CD4-positive, alpha-beta memory T cell (primary cell): ENCODE measurements at regions of chr9 and their contacts with region 1.

Region 1: GRCh38 chr9:37753489-37754190 is at the start of gene TRMT10B:
- DNase-seq: peak; percentile 60 to 77 (median 68)
- H3K4me3 ChIP-seq: peak within 1 kb of the TSS; percentile 94 to 99
- H3K4me3 Mint-ChIP-seq: peak within 1 kb of the TSS; percentile 95 to 99 (median 98)
- H3K27ac ChIP-seq: peak within 1 kb of the TSS; percentile 80
- H3K27ac Mint-ChIP-seq: peak within 1 kb of the TSS; percentile 78 to 97 (median 95)
- H3K4me1 ChIP-seq: peaks cover 15% of the 10 kb centered on the region
- H3K4me1 Mint-ChIP-seq: peaks cover 15 to 46% (median 30%) of the 10 kb centered on the region in 4 donors
- H3K27me3 ChIP-seq: no peaks in the 10 kb centered on the region
- H3K27me3 Mint-ChIP-seq: no peaks in the 10 kb centered on the region
- total RNA-seq, gene TRMT10B: 24.3 to 27.4 TPM

Region 2: DNA sequence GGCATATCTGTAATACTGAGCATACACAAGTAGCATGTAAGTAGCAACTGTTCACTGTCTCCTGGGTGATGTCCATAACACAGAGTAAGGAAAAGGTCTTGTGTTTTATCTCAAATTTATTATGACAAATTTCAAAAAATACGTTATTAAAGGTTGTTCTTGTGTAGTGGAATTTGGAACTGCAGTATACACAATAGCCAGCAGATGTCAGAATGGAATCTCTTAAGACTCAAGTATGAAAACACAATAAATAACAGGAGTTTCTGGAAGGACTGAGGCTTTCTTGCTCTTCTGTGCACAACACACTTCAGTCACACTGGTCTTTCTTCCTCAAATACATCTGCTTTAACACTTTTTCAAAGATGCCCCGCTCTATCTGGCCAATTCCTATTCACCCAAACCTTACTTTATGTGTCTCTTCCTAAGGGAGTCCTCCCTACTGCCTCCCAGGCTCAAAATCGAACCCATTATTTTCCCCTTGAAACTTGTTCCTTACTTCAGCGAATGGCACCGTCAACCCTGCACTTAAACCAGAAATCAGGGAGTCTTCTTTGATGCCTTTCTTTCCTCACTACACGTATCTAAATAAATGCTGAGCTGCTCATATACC is 171.0 kb before region 1 on chr9:
- CTCF ChIA-PET with region 1: no interaction called
- POLR2A ChIA-PET with region 1: no interaction called
- intact Hi-C with region 1: loop called (anchors 5 kb)
- DNase-seq: peak in 4 of 5 donors; percentile 22 to 42 (median 32)
- H3K4me3 ChIP-seq: no peak overlapping the region
- H3K4me3 Mint-ChIP-seq: no peak overlapping the region
- H3K27ac ChIP-seq: no peak overlapping the region
- H3K27ac Mint-ChIP-seq: peak overlapping the region in 4 of 7 donors; percentile 1 to 70 (median 28)
- H3K4me1 ChIP-seq: no peaks in the 10 kb centered on the region
- H3K4me1 Mint-ChIP-seq: peaks cover 3 to 10% (median 6%) of the 10 kb centered on the region in 4 donors
- H3K27me3 ChIP-seq: no peaks in the 10 kb centered on the region
- H3K27me3 Mint-ChIP-seq: no peaks in the 10 kb centered on the region

Region 3: DNA sequence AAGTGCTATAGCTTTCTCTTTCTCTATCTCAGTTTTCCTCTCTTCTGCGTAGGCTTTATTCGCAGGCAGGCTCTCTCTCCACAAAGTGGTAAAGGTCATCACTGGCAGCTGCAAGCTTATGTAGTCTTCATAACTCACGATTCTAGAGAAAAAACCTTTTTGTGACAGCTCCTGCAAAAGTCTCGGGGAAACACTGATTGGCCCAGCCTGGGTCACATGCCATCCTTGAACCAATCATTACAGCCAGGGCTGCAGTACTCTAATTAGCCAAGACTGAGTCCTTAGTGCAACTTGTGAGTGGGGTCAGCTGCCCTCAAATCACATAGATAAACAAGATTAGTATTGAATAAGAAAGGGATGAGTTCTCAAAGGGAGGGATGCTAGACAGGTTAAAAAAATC is 121.2 kb before region 1 on chr9:
- CTCF ChIA-PET with region 1: no interaction called
- POLR2A ChIA-PET with region 1: no interaction called
- intact Hi-C with region 1: no loop called
- DNase-seq: no peak
- H3K4me3 ChIP-seq: no peak overlapping the region
- H3K4me3 Mint-ChIP-seq: no peak overlapping the region
- H3K27ac ChIP-seq: no peak overlapping the region
- H3K27ac Mint-ChIP-seq: no peak overlapping the region
- H3K4me1 ChIP-seq: no peaks in the 10 kb centered on the region
- H3K4me1 Mint-ChIP-seq: no peaks in the 10 kb centered on the region
- H3K27me3 ChIP-seq: no peaks in the 10 kb centered on the region
- H3K27me3 Mint-ChIP-seq: peaks cover 5 to 6% of the 10 kb centered on the region in 2 donors

Region 4: DNA sequence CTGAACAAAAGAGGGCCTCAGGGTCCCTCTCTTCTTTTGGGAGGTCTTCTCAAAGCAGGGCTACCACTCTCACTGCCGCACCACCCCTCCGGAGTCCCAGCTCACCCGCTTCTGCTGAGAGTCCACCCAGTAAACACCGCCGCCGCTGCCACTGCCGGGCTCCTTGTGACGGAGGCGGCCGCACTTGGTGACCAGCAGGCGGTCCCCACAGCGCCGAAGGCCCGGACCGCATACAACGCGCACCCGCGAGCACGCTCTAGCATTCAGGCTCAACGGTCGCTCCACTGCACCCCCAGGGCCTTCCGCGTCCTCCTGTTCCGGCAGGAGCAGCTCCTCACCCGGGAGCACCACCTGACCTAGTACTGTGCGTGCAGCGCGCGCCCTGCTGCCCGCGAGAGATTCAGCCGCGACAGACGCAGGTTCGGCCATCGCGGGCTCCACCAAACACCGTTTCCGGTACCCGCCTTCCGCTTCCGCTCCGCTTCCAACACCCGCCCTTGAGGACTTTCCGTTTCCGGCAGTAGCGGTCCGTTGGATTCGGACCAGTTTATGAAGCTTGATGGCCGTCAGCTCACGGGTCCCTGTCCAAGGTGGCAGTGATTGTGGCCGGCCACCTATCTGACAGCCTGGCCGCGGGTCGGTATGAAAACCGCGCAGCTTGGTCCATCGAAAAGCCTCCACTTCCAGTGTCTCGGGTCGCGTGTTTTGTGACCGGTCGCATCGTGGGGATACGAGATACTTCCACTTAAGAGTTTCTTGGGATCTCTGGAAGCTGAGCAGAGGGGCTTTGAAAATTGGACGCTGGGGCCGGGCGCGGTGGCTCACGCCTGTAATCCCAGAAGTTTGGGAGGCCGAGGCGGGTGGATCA is 31.2 kb after region 1 on chr9 and contains the start of gene EXOSC3:
- CTCF ChIA-PET with region 1: interaction called, 3 read pairs
- POLR2A ChIA-PET with region 1: interaction called, 6 read pairs
- intact Hi-C with region 1: loop called (anchors 1 kb)
- DNase-seq: peak; percentile 82 to 88 (median 83)
- H3K4me3 ChIP-seq: peak within 1 kb of the TSS; percentile 93 to 98
- H3K4me3 Mint-ChIP-seq: peak within 1 kb of the TSS; percentile 96 to 99 (median 96)
- H3K27ac ChIP-seq: peak within 1 kb of the TSS; percentile 83
- H3K27ac Mint-ChIP-seq: peak within 1 kb of the TSS; percentile 95 to 98 (median 97)
- H3K4me1 ChIP-seq: peaks cover 31% of the 10 kb centered on the region
- H3K4me1 Mint-ChIP-seq: peaks cover 23 to 45% (median 30%) of the 10 kb centered on the region in 4 donors
- H3K27me3 ChIP-seq: no peaks in the 10 kb centered on the region
- H3K27me3 Mint-ChIP-seq: no peaks in the 10 kb centered on the region
- total RNA-seq, gene EXOSC3: 63.5 to 68.6 TPM

Region 5: DNA sequence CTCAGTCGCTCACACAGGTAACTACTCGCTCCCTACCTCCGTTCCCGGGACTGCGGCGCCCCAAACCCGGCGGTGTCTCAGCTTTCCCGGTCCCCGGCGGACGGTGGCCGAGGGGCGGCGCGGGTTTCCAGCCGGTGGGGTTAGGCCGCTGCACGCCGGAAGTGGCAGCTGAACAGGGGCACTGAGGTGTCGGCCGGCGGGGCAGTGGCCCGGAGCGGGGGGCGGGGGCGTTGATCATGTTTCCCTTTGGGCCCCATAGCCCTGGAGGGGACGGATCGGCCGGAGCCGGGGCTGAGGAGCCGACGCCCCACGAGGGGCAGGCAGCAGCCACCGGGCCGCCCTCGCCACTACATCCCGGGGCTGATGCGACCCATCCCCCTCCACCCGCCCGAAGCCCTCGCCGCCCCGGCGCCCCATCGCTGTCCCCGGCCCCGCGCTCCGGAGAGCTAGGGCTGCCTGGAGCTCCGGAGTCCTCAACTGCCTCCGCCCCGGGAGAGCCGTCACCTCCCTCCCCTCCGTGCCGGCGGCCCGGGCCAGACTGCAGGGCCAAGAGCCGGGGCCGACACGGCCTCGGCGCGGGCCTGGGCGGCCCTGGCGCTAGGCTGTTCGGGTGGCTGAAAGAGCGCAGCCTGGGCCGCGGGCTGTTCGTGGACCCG is 47.1 kb after region 1 on chr9 and contains the start of gene DCAF10:
- CTCF ChIA-PET with region 1: interaction called, 3 read pairs
- POLR2A ChIA-PET with region 1: interaction called, 5 read pairs
- intact Hi-C with region 1: loop called (anchors 1 kb)
- DNase-seq: peak; percentile 83 to 91 (median 86)
- H3K4me3 ChIP-seq: peak within 1 kb of the TSS; percentile 76 to 98
- H3K4me3 Mint-ChIP-seq: peak within 1 kb of the TSS; percentile 91 to 96 (median 94)
- H3K27ac ChIP-seq: peak within 1 kb of the TSS; percentile 70
- H3K27ac Mint-ChIP-seq: peak within 1 kb of the TSS; percentile 87 to 97 (median 92)
- H3K4me1 ChIP-seq: peaks cover 35% of the 10 kb centered on the region
- H3K4me1 Mint-ChIP-seq: peaks cover 23 to 48% (median 33%) of the 10 kb centered on the region in 4 donors
- H3K27me3 ChIP-seq: no peaks in the 10 kb centered on the region
- H3K27me3 Mint-ChIP-seq: no peaks in the 10 kb centered on the region
- total RNA-seq, gene DCAF10: 20.3 to 21.7 TPM

Region 6: DNA sequence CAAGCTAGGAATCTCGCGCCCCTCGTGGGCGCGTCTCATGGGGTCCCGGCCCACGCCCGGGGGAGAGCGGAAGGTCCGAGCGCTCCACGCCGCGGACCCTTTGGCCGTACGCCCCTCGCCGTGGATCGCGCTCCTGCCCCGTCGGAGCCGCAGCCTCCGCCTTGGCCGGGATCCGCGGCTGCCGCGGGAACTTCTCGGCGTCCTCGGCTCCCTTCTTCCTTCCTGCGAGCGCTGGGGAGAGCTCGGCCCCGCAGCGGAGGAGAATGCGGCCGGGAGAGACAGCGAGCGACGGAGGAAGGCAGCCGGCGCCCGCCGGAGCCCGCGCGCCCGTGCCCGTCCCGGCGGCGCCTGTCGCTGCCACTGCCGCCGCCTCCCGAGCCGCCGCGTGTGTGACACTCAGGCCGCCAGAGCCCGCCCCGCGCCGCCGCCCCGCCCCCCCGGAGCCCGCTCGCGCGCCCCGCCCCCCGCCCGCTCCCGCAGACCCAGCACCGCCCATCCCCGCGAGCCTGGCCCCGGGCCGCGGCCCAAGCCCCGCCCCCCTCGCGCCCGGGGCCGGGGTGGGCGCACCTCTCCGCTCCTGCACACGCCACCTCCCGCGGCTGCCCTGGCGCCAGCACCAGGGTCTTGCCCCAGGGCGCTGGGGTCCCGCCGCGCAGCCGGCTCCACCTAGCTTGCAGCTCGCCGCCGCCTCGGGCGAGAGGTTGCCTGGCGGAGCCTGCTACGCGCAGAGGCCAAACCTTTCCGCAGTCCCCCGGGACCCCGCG is 315.4 kb after region 1 on chr9 and contains the start of gene SHB:
- CTCF ChIA-PET with region 1: no interaction called
- POLR2A ChIA-PET with region 1: no interaction called
- intact Hi-C with region 1: loop called (anchors 5 kb)
- DNase-seq: peak; percentile 75 to 79 (median 77)
- H3K4me3 ChIP-seq: peak within 1 kb of the TSS; percentile 65 to 76
- H3K4me3 Mint-ChIP-seq: peak within 1 kb of the TSS; percentile 81 to 91 (median 88)
- H3K27ac ChIP-seq: peak within 1 kb of the TSS; percentile 61
- H3K27ac Mint-ChIP-seq: peak within 1 kb of the TSS; percentile 63 to 91 (median 82)
- H3K4me1 ChIP-seq: peaks cover 25% of the 10 kb centered on the region
- H3K4me1 Mint-ChIP-seq: peaks cover 14 to 52% (median 28%) of the 10 kb centered on the region in 4 donors
- H3K27me3 ChIP-seq: peaks cover 6% of the 10 kb centered on the region
- H3K27me3 Mint-ChIP-seq: no peaks in the 10 kb centered on the region
- total RNA-seq, gene SHB: 0.81 to 1.3 TPM